ENCODE measurements at regions of chr13 and their contacts with region 1.

Region 1: GRCh38 chr13:48580185-48580803 is 47.4 kb upstream of the RCBTB2 start:
- DNase-seq: peak; percentile 54 to 87 (median 72)
- ATAC-seq: peak; percentile 73
- H3K4me3 ChIP-seq: no peak overlapping the region
- H3K4me3 Mint-ChIP-seq: no peak overlapping the region
- H3K27ac ChIP-seq: no peak overlapping the region
- H3K27ac Mint-ChIP-seq: no peak overlapping the region
- H3K4me1 ChIP-seq: peaks cover 7% of the 10 kb centered on the region
- H3K4me1 Mint-ChIP-seq: peaks cover 9% of the 10 kb centered on the region
- H3K27me3 ChIP-seq: peaks cover 0 to 8% of the 10 kb centered on the region in 2 experiments
- H3K27me3 Mint-ChIP-seq: peaks cover 6% of the 10 kb centered on the region
- CTCF ChIP-seq: peak; percentile 91

Region 2: GRCh38 chr13:48334534-48335127 is 245.7 kb before region 1 on chr13:
- CTCF ChIA-PET with region 1: interaction called, 77 read pairs
- POLR2A ChIA-PET with region 1: interaction called, 15 read pairs
- intact Hi-C with region 1: loop called (anchors 1 kb)
- DNase-seq: peak in 3 of 14 experiments; percentile 68 to 73 (median 71)
- ATAC-seq: peak; percentile 71
- H3K4me3 ChIP-seq: no peak overlapping the region
- H3K4me3 Mint-ChIP-seq: no peak overlapping the region
- H3K27ac ChIP-seq: no peak overlapping the region
- H3K27ac Mint-ChIP-seq: no peak overlapping the region
- H3K4me1 ChIP-seq: no peaks in the 10 kb centered on the region
- H3K4me1 Mint-ChIP-seq: peaks cover 13% of the 10 kb centered on the region
- H3K27me3 ChIP-seq: no peaks in the 10 kb centered on the region
- H3K27me3 Mint-ChIP-seq: no peaks in the 10 kb centered on the region
- CTCF ChIP-seq: peak; percentile 95

Region 3: GRCh38 chr13:48412881-48413351 is 167.4 kb before region 1 on chr13 and contains the start of gene LPAR6:
- CTCF ChIA-PET with region 1: interaction called, 4 read pairs
- POLR2A ChIA-PET with region 1: interaction called, 6 read pairs
- intact Hi-C with region 1: loop called in 1 of 2 experiments (anchors 2 kb)
- DNase-seq: peak in 4 of 14 experiments; percentile 23 to 87 (median 72)
- ATAC-seq: peak; percentile 52
- H3K4me3 ChIP-seq: peak within 1 kb of the TSS; percentile 88
- H3K4me3 Mint-ChIP-seq: peak within 1 kb of the TSS; percentile 95
- H3K27ac ChIP-seq: peak within 1 kb of the TSS; percentile 67 to 78
- H3K27ac Mint-ChIP-seq: peak within 1 kb of the TSS; percentile 95
- H3K4me1 ChIP-seq: peaks cover 12% of the 10 kb centered on the region
- H3K4me1 Mint-ChIP-seq: peaks cover 44% of the 10 kb centered on the region
- H3K27me3 ChIP-seq: no peaks in the 10 kb centered on the region
- H3K27me3 Mint-ChIP-seq: no peaks in the 10 kb centered on the region
- CTCF ChIP-seq: no peak
- total RNA-seq, gene LPAR6: 15.5 to 19.4 TPM

Region 4: DNA sequence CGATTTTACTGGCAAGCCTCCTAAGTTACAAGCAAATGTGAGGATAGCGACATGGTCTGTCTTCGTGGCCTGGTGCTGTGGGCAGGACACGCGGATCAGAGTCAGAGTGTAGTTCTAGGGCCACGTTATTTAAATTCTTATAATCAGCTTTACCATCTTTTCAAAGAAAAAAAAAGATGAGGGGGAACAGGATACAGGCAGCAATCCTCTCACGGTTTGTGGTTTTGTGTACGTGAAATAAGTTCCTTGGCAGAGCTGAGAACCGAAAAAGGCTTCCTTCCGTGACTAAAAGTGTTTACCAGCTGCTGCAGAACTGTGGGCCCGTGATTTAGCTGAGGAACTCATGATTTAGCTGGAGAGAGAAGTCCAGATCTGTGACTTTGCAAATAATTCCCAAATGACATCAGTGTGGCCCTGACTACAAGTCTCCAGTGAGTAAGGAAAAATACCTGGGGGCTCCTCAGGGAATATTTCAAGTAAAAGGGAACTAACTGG is 74.7 kb before region 1 on chr13:
- CTCF ChIA-PET with region 1: interaction called, 4 read pairs
- POLR2A ChIA-PET with region 1: interaction called, 10 read pairs
- intact Hi-C with region 1: no loop called
- DNase-seq: peak in 12 of 14 experiments; percentile 27 to 91 (median 46)
- ATAC-seq: peak; percentile 93
- H3K4me3 ChIP-seq: no peak overlapping the region
- H3K4me3 Mint-ChIP-seq: peak overlapping the region; percentile 54
- H3K27ac ChIP-seq: peak overlapping the region; percentile 52 to 58
- H3K27ac Mint-ChIP-seq: peak overlapping the region; percentile 91
- H3K4me1 ChIP-seq: peaks cover 46% of the 10 kb centered on the region
- H3K4me1 Mint-ChIP-seq: peaks cover 55% of the 10 kb centered on the region
- H3K27me3 ChIP-seq: no peaks in the 10 kb centered on the region
- H3K27me3 Mint-ChIP-seq: no peaks in the 10 kb centered on the region
- CTCF ChIP-seq: no peak

Region 5: GRCh38 chr13:48761256-48761655 is 181.0 kb after region 1 on chr13:
- CTCF ChIA-PET with region 1: no interaction called
- POLR2A ChIA-PET with region 1: no interaction called
- intact Hi-C with region 1: no loop called
- DNase-seq: no peak
- ATAC-seq: no peak
- H3K4me3 ChIP-seq: no peak overlapping the region
- H3K4me3 Mint-ChIP-seq: no peak overlapping the region
- H3K27ac ChIP-seq: no peak overlapping the region
- H3K27ac Mint-ChIP-seq: no peak overlapping the region
- H3K4me1 ChIP-seq: no peaks in the 10 kb centered on the region
- H3K4me1 Mint-ChIP-seq: no peaks in the 10 kb centered on the region
- H3K27me3 ChIP-seq: no peaks in the 10 kb centered on the region
- H3K27me3 Mint-ChIP-seq: peaks cover 4% of the 10 kb centered on the region
- CTCF ChIP-seq: no peak